CD4-positive, alpha-beta memory T cell (primary cell): ENCODE measurements at regions of chr12 and their contacts with region 1.

Region 1: GRCh38 chr12:54214553-54215406 is 26.0 kb upstream of the SMUG1 start:
- DNase-seq: peak; percentile 88 to 90 (median 88)
- H3K4me3 ChIP-seq: peak overlapping the region in 1 of 2 donors; percentile 70
- H3K4me3 Mint-ChIP-seq: peak overlapping the region; percentile 63 to 85 (median 83)
- H3K27ac ChIP-seq: no peak overlapping the region
- H3K27ac Mint-ChIP-seq: peak overlapping the region in 3 of 7 donors; percentile 12 to 90 (median 64)
- H3K4me1 ChIP-seq: peaks cover 37% of the 10 kb centered on the region
- H3K4me1 Mint-ChIP-seq: peaks cover 17 to 48% (median 27%) of the 10 kb centered on the region in 4 donors
- H3K27me3 ChIP-seq: no peaks in the 10 kb centered on the region
- H3K27me3 Mint-ChIP-seq: peaks cover 2 to 3% of the 10 kb centered on the region in 2 donors

Region 2: DNA sequence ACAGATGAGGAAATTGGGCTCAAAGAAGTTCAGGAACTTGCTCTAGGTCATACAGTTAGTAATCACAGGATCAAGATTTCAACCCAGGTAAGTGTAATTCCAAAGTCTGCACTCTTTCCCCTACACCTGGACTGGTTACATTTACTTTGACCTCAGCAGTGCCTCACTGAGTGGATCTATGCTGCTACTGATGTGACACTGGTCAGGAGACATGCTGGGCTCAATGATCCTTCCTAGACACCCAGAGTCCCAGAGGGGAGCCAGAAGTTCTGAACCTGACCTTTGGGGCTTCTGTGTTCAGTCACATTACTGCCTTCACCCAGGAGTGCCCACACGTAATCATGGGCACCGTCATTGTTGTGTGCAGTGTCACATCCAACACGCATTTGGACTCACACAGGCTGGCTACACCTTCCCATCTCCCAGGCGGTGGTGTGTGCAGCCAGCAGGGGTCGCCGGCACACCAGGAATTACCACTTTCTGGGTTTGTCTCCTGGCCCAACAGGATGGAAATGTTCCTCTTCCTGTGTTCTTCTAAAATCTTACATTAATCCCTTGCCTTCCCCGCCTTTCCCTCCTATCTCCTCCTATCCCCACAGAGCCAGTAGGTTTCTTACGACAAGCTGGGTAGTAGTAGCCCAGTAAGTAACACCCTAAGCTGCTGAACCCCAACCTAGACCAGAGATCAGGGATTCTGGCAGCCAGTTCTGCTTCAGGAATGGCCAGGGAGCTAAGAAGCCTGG is 513.1 kb before region 1 on chr12:
- CTCF ChIA-PET with region 1: no interaction called
- POLR2A ChIA-PET with region 1: no interaction called
- intact Hi-C with region 1: loop called (anchors 1 kb)
- DNase-seq: peak; percentile 65 to 72 (median 69)
- H3K4me3 ChIP-seq: no peak overlapping the region
- H3K4me3 Mint-ChIP-seq: no peak overlapping the region
- H3K27ac ChIP-seq: no peak overlapping the region
- H3K27ac Mint-ChIP-seq: peak overlapping the region in 1 of 7 donors; percentile 10
- H3K4me1 ChIP-seq: peaks cover 4% of the 10 kb centered on the region
- H3K4me1 Mint-ChIP-seq: peaks cover 4 to 12% (median 9%) of the 10 kb centered on the region in 4 donors
- H3K27me3 ChIP-seq: peaks cover 30% of the 10 kb centered on the region
- H3K27me3 Mint-ChIP-seq: peaks cover 54 to 75% of the 10 kb centered on the region in 2 donors

Region 3: DNA sequence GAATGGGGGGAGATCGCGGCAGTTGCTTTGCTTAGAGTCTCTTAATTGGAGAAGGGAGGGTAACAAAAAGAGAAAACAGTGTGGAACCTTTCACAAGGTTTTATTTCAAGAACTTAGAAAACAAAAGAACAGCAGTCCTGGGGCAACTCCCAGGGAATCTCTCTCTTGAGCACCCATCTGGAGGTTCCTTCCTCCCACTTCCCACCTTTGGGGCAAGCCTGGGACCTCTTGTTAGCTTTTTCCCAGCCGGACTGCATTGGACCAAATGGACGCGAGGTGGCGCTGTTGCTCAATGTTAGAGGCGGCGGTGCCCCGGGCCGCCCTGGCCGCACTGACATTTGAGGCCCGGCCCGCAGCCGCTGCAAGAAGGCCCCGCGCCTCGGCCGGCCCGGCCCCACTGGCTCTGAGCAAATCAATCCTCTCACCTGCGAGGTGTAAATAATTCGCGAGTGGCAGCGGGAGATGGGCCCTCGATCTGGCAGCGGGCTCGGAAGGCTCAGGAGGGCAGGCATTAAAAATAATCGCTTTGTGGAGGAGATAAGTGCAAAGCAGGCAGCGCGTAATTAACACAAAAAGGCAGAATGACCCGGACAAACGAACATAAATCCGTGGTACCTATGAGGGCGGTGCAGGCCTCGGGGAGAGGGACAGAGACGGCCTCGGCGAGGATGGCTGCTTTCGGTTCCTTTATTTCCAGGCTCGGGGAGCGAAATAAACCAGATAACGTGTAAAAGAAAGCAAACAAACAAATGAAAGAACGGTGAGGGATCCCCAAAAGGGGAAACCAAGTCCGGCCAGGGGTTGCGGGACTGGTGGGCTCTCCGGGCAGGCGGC is 208.7 kb before region 1 on chr12:
- CTCF ChIA-PET with region 1: interaction called, 103 read pairs
- POLR2A ChIA-PET with region 1: interaction called, 5 read pairs
- intact Hi-C with region 1: loop called (anchors 1 kb)
- DNase-seq: peak; percentile 76 to 87 (median 80)
- H3K4me3 ChIP-seq: peak overlapping the region in 1 of 2 donors; percentile 44
- H3K4me3 Mint-ChIP-seq: peak overlapping the region; percentile 64 to 92 (median 79)
- H3K27ac ChIP-seq: no peak overlapping the region
- H3K27ac Mint-ChIP-seq: peak overlapping the region in 5 of 7 donors; percentile 5 to 58 (median 18)
- H3K4me1 ChIP-seq: peaks cover 19% of the 10 kb centered on the region
- H3K4me1 Mint-ChIP-seq: peaks cover 10 to 42% (median 26%) of the 10 kb centered on the region in 4 donors
- H3K27me3 ChIP-seq: peaks cover 84% of the 10 kb centered on the region
- H3K27me3 Mint-ChIP-seq: peaks cover 70 to 85% of the 10 kb centered on the region in 2 donors

Region 4: GRCh38 chr12:54068418-54069070 is 146.2 kb before region 1 on chr12:
- CTCF ChIA-PET with region 1: no interaction called
- POLR2A ChIA-PET with region 1: no interaction called
- intact Hi-C with region 1: no loop called
- DNase-seq: no peak
- H3K4me3 ChIP-seq: no peak overlapping the region
- H3K4me3 Mint-ChIP-seq: no peak overlapping the region
- H3K27ac ChIP-seq: no peak overlapping the region
- H3K27ac Mint-ChIP-seq: no peak overlapping the region
- H3K4me1 ChIP-seq: no peaks in the 10 kb centered on the region
- H3K4me1 Mint-ChIP-seq: no peaks in the 10 kb centered on the region
- H3K27me3 ChIP-seq: peaks cover 9% of the 10 kb centered on the region
- H3K27me3 Mint-ChIP-seq: peaks cover 24 to 51% of the 10 kb centered on the region in 2 donors

Region 5: GRCh38 chr12:54175130-54175963 is 39.4 kb before region 1 on chr12:
- CTCF ChIA-PET with region 1: no interaction called
- POLR2A ChIA-PET with region 1: no interaction called
- intact Hi-C with region 1: no loop called
- DNase-seq: no peak
- H3K4me3 ChIP-seq: no peak overlapping the region
- H3K4me3 Mint-ChIP-seq: peak overlapping the region in 1 of 8 donors; percentile 16
- H3K27ac ChIP-seq: no peak overlapping the region
- H3K27ac Mint-ChIP-seq: no peak overlapping the region
- H3K4me1 ChIP-seq: peaks cover 14% of the 10 kb centered on the region
- H3K4me1 Mint-ChIP-seq: peaks cover 0 to 7% (median 5%) of the 10 kb centered on the region in 4 donors
- H3K27me3 ChIP-seq: peaks cover 41% of the 10 kb centered on the region
- H3K27me3 Mint-ChIP-seq: peaks cover 4% of the 10 kb centered on the region in 2 donors

Region 6: DNA sequence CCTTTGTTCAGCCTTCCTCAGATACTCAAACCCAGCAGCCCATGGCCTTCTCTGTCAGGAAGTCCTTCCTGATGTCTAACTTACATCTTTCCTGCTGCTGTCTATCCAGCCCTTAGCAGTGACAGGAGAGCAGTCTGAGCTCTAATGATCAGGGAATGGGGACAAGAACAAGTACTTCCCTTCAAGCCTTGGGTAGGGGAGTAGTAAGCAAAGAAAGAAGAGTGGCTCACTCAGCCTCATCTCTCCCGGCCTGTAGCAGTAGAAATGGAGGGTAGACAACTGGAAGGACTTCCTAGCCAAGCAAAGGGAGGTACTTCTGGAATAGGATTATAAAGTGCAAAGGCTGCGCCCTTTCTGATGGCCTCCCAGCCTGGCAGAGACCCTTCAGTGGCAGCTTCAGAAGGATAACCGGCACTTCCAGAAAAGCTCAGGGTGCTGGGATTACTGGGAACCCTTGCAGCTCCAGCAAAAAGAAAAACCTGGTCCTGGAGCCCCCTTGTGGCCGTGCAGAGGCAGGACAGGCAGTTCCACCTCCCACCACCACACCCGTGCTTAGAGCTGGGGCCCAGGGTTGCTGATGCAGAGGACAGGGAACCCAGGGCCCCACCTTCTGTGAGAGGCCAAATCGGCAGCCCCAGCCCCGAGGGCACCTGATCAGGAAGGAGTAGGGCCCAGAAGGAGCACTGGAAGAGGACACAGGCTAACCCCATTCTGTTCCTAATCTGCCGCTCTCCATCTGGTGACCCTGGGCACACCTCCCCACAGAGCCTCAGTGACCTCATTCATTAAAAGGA is 13.6 kb before region 1 on chr12:
- CTCF ChIA-PET with region 1: interaction called, 43 read pairs
- POLR2A ChIA-PET with region 1: no interaction called
- intact Hi-C with region 1: no loop called
- DNase-seq: peak; percentile 60 to 71 (median 64)
- H3K4me3 ChIP-seq: no peak overlapping the region
- H3K4me3 Mint-ChIP-seq: no peak overlapping the region
- H3K27ac ChIP-seq: no peak overlapping the region
- H3K27ac Mint-ChIP-seq: peak overlapping the region in 1 of 7 donors; percentile 42
- H3K4me1 ChIP-seq: no peaks in the 10 kb centered on the region
- H3K4me1 Mint-ChIP-seq: peaks cover 0 to 5% (median 2%) of the 10 kb centered on the region in 4 donors
- H3K27me3 ChIP-seq: peaks cover 19% of the 10 kb centered on the region
- H3K27me3 Mint-ChIP-seq: peaks cover 37 to 51% of the 10 kb centered on the region in 2 donors

Region 7: GRCh38 chr12:54359033-54359761 is 144.4 kb after region 1 on chr12:
- CTCF ChIA-PET with region 1: interaction called, 17 read pairs
- POLR2A ChIA-PET with region 1: interaction called, 17 read pairs
- intact Hi-C with region 1: loop called (anchors 2 kb)
- DNase-seq: peak; percentile 93 to 99 (median 95)
- H3K4me3 ChIP-seq: peak overlapping the region; percentile 87 to 91
- H3K4me3 Mint-ChIP-seq: no peak overlapping the region
- H3K27ac ChIP-seq: peak overlapping the region; percentile 95
- H3K27ac Mint-ChIP-seq: no peak overlapping the region
- H3K4me1 ChIP-seq: peaks cover 36% of the 10 kb centered on the region
- H3K4me1 Mint-ChIP-seq: peaks cover 10 to 19% (median 14%) of the 10 kb centered on the region in 4 donors
- H3K27me3 ChIP-seq: no peaks in the 10 kb centered on the region
- H3K27me3 Mint-ChIP-seq: no peaks in the 10 kb centered on the region